Dorsolateral prefrontal cortex (tissue), 120 donors: ENCODE measurements at regions of chr3 and their contacts with region 1.

Region 1: GRCh38 chr3:33717866-33718594 is at the start of gene CLASP2:
- DNase-seq: peak; percentile 62 to 92 (median 78)
- H3K4me3 ChIP-seq: peak within 1 kb of the TSS; percentile 58 to 98 (median 89)
- H3K27ac ChIP-seq: peak within 1 kb of the TSS in 58 of 59 donors; percentile 36 to 96 (median 86)
- H3K27me3 ChIP-seq: no peaks in the 10 kb centered on the region
- CTCF ChIP-seq: peak in 21 of 56 donors; percentile 1 to 40 (median 21)
- total RNA-seq, gene CLASP2: 160 to 469 (median 336) TPM

Region 2: DNA sequence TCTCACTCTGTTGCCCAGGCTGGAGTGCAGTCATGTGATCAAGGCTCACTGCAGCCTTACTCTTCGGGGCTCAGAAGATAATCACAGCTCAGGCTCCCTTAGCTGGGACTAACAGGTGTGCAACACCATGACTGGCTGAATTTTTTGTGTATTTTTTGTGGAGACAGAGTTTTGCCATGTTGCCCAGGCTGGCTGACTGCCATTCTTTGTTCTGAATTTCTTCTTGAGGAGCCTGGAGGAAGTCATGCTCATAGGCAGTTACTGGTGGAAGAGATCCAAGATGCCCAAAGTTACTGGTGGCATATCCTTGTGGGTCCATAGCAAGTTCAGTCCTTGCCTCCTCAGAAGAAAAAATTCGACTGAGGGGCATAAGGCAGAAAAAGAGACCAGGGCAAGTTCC is 261.3 kb before region 1 on chr3:
- intact Hi-C with region 1: no loop called
- DNase-seq: no peak
- H3K4me3 ChIP-seq: no peak overlapping the region
- H3K27ac ChIP-seq: no peak overlapping the region
- H3K27me3 ChIP-seq: no peaks in the 10 kb centered on the region
- CTCF ChIP-seq: no peak

Region 3: DNA sequence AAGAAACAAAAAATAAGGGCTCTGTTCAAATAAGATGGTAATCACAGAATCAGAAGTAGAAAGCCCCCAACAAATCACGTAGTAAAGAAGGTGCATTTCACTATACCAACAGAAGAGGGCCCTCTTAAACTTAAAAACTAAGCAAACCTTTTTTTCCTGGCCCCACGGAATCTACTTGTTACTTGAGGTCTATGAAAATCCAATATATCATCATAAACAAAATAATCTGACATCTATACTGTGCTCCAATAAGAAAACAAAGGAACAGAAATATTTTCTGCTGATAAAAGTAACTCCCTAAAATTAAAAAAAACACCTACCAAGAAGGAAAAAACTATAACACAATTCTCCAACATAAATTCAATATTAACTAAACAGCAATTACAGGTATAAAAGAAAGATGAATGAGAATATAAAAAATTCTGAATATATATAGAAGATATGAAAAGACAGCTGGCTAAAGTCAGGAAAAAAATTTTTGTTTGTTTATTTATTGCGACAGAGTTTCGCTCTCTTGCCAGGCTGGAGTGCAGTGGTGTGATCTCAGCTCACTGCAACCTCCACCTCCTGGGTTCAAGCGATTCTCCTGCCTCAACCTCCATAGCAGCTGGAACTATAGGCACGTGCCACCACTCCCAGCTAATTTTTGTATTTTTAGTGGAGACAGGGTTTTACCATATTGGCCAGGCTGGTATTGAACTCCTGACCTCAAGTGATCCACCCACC is 81.7 kb before region 1 on chr3:
- intact Hi-C with region 1: loop called (anchors 2 kb)
- DNase-seq: no peak
- H3K4me3 ChIP-seq: peak overlapping the region in 8 of 59 donors; percentile 1 to 20 (median 7)
- H3K27ac ChIP-seq: peak overlapping the region in 41 of 59 donors; percentile 7 to 76 (median 50)
- H3K27me3 ChIP-seq: no peaks in the 10 kb centered on the region
- CTCF ChIP-seq: peak; percentile 59 to 90 (median 74)

Region 4: DNA sequence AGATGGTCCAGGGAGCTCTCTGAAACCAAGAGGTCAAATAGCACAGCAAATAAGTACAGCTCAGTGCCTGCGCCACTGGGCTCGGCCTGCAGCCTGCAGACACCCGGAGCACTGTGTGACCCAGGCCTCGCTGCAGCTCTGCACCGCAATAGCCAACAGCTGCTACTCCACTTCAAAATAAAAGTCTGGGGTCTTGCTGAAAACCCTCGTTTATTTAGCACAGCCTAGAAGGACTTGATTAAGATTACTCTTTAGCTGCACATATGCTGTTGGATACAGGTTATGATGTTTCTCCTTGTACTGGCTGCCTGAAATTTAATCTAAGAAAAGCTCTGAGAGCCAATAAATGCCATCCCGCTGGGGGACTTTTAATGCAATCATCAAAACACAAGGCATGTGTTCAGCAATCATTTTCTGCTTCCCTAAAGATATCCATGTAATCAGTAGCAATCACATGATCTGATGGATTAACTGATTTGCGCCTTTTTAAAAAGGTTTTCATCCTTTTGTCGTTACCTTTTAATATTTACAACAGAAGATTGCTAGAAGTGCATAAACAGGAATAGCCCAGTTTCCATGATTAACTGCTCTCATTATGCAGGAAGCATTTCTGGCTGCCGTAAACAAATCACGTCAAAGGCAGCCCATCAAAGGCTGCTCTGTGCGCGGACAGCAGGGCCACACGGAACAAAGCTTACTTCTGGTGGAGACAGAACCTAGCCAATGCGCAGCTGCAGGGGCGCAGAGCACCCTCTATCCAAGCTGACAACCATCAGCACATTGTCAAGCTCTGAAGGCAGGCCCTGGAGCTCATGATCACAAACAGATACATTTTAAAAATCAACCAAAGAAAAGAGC is 58.8 kb before region 1 on chr3:
- intact Hi-C with region 1: loop called (anchors 1 kb)
- DNase-seq: peak; percentile 85 to 97 (median 94)
- H3K4me3 ChIP-seq: peak overlapping the region; percentile 37 to 90 (median 77)
- H3K27ac ChIP-seq: peak overlapping the region; percentile 67 to 100 (median 98)
- H3K27me3 ChIP-seq: no peaks in the 10 kb centered on the region
- CTCF ChIP-seq: peak in 33 of 56 donors; percentile 6 to 34 (median 19)

Region 5: DNA sequence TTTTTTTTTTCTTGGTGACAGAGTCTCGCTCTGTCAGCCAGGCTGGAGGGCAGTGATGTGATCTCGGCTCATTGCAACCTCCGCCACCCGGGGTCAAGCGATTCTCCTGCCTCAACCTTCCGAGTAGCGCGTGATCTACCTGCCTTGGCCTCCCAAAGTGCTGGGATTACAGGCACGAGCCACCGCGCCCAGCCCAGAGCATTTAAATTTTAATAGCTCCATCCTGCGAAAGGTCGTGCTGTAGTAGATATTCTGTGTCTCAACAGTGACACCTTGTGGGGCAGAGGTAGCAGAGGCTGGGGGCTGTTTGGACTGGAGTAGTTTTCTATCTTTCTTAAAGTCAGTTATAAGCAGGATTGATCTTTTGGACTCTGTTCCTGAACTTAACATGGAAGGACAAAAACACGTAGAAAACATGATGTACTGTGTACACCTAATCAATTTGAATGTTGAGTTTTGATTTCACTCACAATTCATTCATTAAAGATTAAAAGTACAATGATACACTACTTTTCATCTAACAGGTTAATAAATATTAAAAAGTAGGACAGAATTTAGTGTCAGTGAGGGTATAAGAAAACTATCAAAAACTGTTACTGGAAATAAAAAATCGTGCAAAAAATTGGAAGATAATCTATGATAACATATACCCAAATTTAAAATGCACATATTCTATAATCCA is 69.4 kb after region 1 on chr3:
- intact Hi-C with region 1: loop called in 1 of 2 experiments (anchors 5 kb)
- DNase-seq: peak in 8 of 10 donors; percentile 43 to 68 (median 56)
- H3K4me3 ChIP-seq: peak overlapping the region; percentile 18 to 72 (median 52)
- H3K27ac ChIP-seq: no peak overlapping the region
- H3K27me3 ChIP-seq: no peaks in the 10 kb centered on the region
- CTCF ChIP-seq: peak; percentile 35 to 89 (median 74)

Region 6: DNA sequence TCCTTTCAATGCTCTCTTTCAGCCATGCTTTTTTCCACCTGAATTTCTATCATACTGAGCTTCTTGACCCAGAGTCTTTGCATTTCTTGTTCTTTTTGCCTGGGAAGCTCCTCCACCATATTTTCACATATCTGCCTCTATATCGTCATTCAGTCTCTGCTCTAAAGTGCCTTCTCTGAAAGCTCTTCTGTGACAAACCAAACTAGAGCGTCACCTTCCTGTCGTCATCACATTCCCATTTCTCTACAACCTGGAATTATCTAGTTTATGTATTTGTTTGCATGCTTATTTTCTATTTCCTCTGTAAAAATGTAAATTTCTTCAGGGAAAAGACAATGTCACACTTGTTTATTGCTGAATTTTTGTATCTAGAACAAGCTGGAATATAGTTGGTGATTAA is 797.8 kb after region 1 on chr3:
- intact Hi-C with region 1: no loop called
- DNase-seq: no peak
- H3K4me3 ChIP-seq: no peak overlapping the region
- H3K27ac ChIP-seq: no peak overlapping the region
- H3K27me3 ChIP-seq: no peaks in the 10 kb centered on the region
- CTCF ChIP-seq: no peak